T-cell (primary cell): ENCODE measurements at regions of chr10 and their contacts with region 1.

Region 1: DNA sequence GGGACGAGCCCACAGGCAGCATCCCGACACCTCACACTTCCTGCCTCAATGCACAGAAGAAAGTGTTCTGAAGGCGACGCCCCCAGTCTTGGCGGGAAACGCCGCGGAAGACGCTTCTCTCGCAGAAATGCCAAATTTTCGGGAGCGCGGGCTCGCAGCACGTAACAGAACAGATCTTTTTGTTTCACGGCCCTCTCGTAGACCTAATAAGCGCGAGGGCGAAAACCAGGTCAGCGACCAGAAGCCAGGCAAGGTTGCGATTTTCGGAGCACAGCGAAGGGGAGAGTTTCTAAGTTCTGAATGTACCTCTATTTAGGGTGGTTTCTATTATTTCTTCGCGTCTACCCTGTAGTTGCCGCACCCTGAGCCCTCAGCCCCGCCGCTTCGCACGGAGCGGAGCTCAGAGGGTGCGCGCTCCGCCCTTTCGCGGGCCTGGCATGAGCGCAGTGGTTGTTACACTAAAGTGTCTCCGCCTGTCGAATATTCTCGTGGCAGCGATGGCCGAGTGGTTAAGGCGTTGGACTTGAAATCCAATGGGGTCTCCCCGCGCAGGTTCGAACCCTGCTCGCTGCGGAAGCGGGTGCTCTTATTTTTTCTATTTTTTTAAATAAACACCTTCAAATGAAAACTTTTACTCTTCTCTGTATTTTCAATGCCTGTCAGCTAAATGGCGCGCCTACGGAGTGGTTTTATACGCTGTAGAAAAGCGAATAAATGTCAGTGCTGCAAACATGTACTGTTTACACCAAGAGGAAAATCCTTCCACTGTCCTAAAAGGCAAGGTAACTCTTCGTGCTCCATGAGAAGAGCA is 68.2 kb upstream of the CTNNA3 start:
- DNase-seq: peak; percentile 92 to 100 (median 95)
- ATAC-seq: peak; percentile 82 to 89 (median 86)
- H3K4me3 ChIP-seq: peak overlapping the region; percentile 96 to 99
- H3K4me3 Mint-ChIP-seq: peak overlapping the region; percentile 87 to 93 (median 87)
- H3K27ac ChIP-seq: peak overlapping the region; percentile 96
- H3K27ac Mint-ChIP-seq: peak overlapping the region; percentile 94 to 98
- H3K4me1 ChIP-seq: peaks cover 3 to 10% of the 10 kb centered on the region in 2 experiments
- H3K4me1 Mint-ChIP-seq: peaks cover 8 to 16% (median 12%) of the 10 kb centered on the region in 3 donors
- H3K27me3 ChIP-seq: no peaks in the 10 kb centered on the region
- H3K27me3 Mint-ChIP-seq: peaks cover 4 to 5% of the 10 kb centered on the region in 2 donors

Region 2: DNA sequence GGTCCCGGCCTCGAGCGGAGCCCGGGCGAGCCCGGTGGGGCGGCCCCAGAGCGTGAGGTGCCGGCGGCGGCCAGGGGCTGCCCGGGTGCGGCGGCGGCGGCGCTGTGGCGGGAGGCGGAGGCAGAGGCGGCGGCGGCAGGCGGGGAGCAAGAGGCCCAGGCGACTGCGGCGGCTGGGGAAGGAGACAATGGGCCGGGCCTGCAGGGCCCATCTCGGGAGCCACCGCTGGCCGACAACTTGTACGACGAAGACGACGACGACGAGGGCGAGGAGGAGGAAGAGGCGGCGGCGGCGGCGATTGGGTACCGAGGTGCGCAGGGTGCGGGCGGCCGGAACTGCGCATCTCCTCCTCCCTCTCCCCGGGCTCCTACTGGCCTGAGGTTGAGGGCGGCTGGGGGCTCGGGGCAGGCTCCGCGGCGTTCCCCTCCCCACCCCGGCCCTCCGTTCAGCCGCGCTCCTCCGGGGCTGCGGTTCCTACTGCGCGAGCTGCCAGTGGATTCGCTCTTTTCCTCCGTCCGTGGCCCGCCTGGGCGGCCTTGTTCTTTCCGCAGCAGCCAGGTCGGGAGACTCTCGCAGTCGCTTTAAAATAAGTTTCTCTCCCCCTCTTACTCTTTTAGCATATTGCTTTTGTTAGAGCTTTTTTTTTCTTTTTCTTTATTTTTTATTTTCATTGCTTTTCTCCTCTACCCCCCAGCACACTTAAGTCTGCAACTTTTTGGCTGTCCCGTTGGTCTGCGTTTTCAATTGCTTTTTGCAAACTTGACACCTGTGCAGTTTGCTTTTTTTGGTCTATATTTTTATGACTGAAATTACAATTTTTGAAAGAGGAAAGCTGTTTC is 120.8 kb after region 1 on chr10:
- CTCF ChIA-PET with region 1: no interaction called
- POLR2A ChIA-PET with region 1: interaction called in 1 of 2 experiments, 14 read pairs
- DNase-seq: peak; percentile 55 to 86 (median 70)
- ATAC-seq: peak; percentile 74 to 79 (median 76)
- H3K4me3 ChIP-seq: peak overlapping the region; percentile 64 to 78
- H3K4me3 Mint-ChIP-seq: peak overlapping the region; percentile 88 to 95 (median 90)
- H3K27ac ChIP-seq: peak overlapping the region; percentile 70
- H3K27ac Mint-ChIP-seq: peak overlapping the region; percentile 90
- H3K4me1 ChIP-seq: peaks cover 6 to 24% of the 10 kb centered on the region in 2 experiments
- H3K4me1 Mint-ChIP-seq: peaks cover 37 to 41% (median 39%) of the 10 kb centered on the region in 3 donors
- H3K27me3 ChIP-seq: no peaks in the 10 kb centered on the region
- H3K27me3 Mint-ChIP-seq: no peaks in the 10 kb centered on the region

Region 3: DNA sequence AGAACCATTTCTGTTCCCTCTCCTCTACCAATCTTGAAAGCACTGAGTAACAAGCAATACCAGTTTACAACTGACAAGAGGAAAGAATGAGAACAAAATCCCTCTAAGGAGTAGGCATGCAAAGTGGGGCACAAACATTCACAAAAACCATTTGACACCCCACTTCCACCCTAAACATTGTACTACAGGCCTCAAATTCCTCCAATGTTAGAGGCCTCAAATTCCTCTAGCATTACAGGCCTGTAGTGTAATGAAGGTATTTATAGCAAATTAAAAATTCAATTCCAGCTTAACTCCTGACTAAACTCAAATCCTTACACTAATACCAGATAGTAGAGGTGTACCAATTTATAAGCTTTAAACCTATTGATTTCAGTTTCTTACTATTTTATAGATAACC is 205.7 kb after region 1 on chr10:
- CTCF ChIA-PET with region 1: no interaction called
- POLR2A ChIA-PET with region 1: interaction called in 1 of 2 experiments, 13 read pairs
- DNase-seq: no peak
- ATAC-seq: no peak
- H3K4me3 ChIP-seq: no peak overlapping the region
- H3K4me3 Mint-ChIP-seq: no peak overlapping the region
- H3K27ac ChIP-seq: no peak overlapping the region
- H3K27ac Mint-ChIP-seq: no peak overlapping the region
- H3K4me1 ChIP-seq: no peaks in the 10 kb centered on the region
- H3K4me1 Mint-ChIP-seq: peaks cover 12 to 15% (median 14%) of the 10 kb centered on the region in 3 donors
- H3K27me3 ChIP-seq: no peaks in the 10 kb centered on the region
- H3K27me3 Mint-ChIP-seq: no peaks in the 10 kb centered on the region

Region 4: GRCh38 chr10:68163735-68164134 is 399.5 kb after region 1 on chr10:
- CTCF ChIA-PET with region 1: no interaction called
- POLR2A ChIA-PET with region 1: no interaction called
- DNase-seq: no peak
- ATAC-seq: no peak
- H3K4me3 ChIP-seq: no peak overlapping the region
- H3K4me3 Mint-ChIP-seq: no peak overlapping the region
- H3K27ac ChIP-seq: no peak overlapping the region
- H3K27ac Mint-ChIP-seq: no peak overlapping the region
- H3K4me1 ChIP-seq: no peaks in the 10 kb centered on the region
- H3K4me1 Mint-ChIP-seq: no peaks in the 10 kb centered on the region
- H3K27me3 ChIP-seq: no peaks in the 10 kb centered on the region
- H3K27me3 Mint-ChIP-seq: peaks cover 0 to 2% of the 10 kb centered on the region in 2 donors

Region 5: DNA sequence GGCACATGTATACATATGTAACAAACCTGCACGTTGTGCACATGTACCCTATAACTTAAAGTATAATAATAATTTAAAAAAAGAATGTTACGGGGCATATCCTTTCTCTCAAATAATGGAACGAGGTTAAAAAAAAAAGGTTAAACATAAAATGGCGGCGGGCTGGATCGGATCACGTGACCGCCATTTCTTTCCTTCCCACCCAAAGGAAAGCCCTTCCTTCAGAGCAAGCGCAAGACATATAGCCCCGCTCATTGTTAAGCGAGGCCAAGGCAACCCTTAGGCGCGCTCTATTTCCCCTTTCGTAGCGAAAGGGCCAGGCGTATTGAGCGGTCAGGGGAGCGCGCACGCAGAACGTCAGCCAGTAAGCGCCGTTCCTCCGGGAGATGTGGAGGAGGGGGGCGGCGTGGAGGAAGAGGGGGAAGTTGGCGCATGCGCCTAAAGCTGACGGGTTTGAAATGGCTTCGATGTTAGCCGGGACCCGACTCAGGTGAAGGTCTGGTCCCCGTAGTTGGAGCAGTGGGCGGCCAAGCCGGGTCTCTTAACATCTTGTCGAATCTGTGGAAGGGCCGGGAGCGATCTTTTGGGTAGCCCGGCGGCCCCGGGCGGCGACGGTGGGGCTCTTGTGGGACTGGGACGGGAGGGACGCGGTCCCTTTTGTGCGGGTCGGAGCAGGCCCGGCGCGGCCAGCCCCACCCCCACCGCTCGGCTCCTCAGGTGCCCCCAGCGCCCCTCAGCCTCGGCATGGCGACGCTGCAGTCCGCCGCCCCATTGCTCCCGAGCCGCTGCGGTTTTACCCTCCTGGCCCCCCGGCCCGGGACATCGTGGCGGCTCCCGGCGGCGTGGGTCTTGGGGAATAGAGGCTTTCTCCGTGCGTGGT is 956.8 kb after region 1 on chr10 and contains the start of gene CCAR1:
- CTCF ChIA-PET with region 1: no interaction called
- POLR2A ChIA-PET with region 1: interaction called in 1 of 2 experiments, 10 read pairs
- DNase-seq: peak; percentile 89 to 99 (median 96)
- ATAC-seq: peak; percentile 97 to 99 (median 98)
- H3K4me3 ChIP-seq: peak within 1 kb of the TSS; percentile 92 to 99
- H3K4me3 Mint-ChIP-seq: peak within 1 kb of the TSS; percentile 94 to 96 (median 96)
- H3K27ac ChIP-seq: peak within 1 kb of the TSS; percentile 87
- H3K27ac Mint-ChIP-seq: peak within 1 kb of the TSS; percentile 96 to 98
- H3K4me1 ChIP-seq: peaks cover 8 to 19% of the 10 kb centered on the region in 2 experiments
- H3K4me1 Mint-ChIP-seq: peaks cover 16 to 19% (median 18%) of the 10 kb centered on the region in 3 donors
- H3K27me3 ChIP-seq: peaks cover 0 to 3% of the 10 kb centered on the region in 2 experiments
- H3K27me3 Mint-ChIP-seq: no peaks in the 10 kb centered on the region
- total RNA-seq, gene CCAR1: 73.1 to 91.1 (median 76.6) TPM